ENCODE measurements at regions of chr10 and their contacts with region 1.

Region 1: GRCh38 chr10:3095373-3096139 is 28.2 kb downstream of the PFKP start:
- DNase-seq: peak; percentile 98
- H3K4me3 ChIP-seq: peak overlapping the region in 1 of 3 experiments; percentile 2
- H3K27ac ChIP-seq: peak overlapping the region; percentile 99
- H3K4me1 ChIP-seq: peaks cover 70% of the 10 kb centered on the region
- H3K27me3 ChIP-seq: no peaks in the 10 kb centered on the region
- CTCF ChIP-seq: no peak

Region 2: GRCh38 chr10:2978111-2978510 is 117.4 kb before region 1 on chr10:
- CTCF ChIA-PET with region 1: no interaction called
- dilution Hi-C with region 1: no loop called
- in situ Hi-C with region 1: no loop called
- intact Hi-C with region 1: no loop called
- DNase-seq: peak; percentile 50
- H3K4me3 ChIP-seq: no peak overlapping the region
- H3K27ac ChIP-seq: no peak overlapping the region
- H3K4me1 ChIP-seq: no peaks in the 10 kb centered on the region
- H3K27me3 ChIP-seq: no peaks in the 10 kb centered on the region
- CTCF ChIP-seq: peak; percentile 48 to 68

Region 3: GRCh38 chr10:3068201-3068967 is 27.2 kb before region 1 on chr10:
- CTCF ChIA-PET with region 1: interaction called, 5 read pairs
- dilution Hi-C with region 1: no loop called
- in situ Hi-C with region 1: no loop called
- intact Hi-C with region 1: loop called (anchors 1 kb)
- DNase-seq: peak; percentile 42
- H3K4me3 ChIP-seq: peak overlapping the region; percentile 85 to 94 (median 94)
- H3K27ac ChIP-seq: peak overlapping the region; percentile 48
- H3K4me1 ChIP-seq: peaks cover 44% of the 10 kb centered on the region
- H3K27me3 ChIP-seq: no peaks in the 10 kb centered on the region
- CTCF ChIP-seq: no peak

Region 4: DNA sequence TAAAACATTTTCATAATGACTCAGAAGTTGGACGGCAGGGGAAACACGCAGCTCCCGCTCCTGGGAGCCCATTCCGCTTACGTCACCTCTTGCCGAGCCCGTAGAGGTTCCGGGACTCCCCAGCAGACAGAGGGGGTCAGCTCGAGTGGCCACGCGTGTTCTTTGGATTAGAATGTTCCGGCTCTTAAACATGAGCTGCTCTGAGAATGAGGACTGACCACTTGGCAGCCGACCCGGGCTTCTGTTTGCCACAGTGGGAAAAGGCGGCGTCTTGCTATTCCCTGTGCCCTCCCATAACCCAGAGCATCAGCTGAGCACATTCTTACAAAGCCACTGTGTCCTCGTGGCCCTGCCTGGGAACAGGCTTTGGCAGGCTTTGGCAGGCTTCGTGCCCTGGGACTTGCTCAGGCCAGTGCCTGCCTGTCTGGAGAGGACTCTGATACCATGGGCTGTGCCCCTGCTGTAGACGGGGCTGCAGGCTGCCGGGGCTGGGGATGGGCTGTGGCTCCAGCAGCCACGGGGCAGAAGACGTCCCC is 11.9 kb after region 1 on chr10:
- CTCF ChIA-PET with region 1: interaction called, 4 read pairs
- dilution Hi-C with region 1: no loop called
- in situ Hi-C with region 1: no loop called
- intact Hi-C with region 1: loop called (anchors 1 kb)
- DNase-seq: peak; percentile 97
- H3K4me3 ChIP-seq: peak overlapping the region; percentile 1 to 30 (median 18)
- H3K27ac ChIP-seq: peak overlapping the region; percentile 98
- H3K4me1 ChIP-seq: peaks cover 19% of the 10 kb centered on the region
- H3K27me3 ChIP-seq: no peaks in the 10 kb centered on the region
- CTCF ChIP-seq: no peak